Activated CD4-positive, alpha-beta T cell treated with anti-CD3 and anti-CD28 coated beads, Interleukin-2, amount 10 ng/mL, durations not matched to agents 24 days and 14 days (primary cell): ENCODE measurements at regions of chr2 and their contacts with region 1.

Region 1: GRCh38 chr2:197499594-197500526 is at the starts of genes HSPD1 and HSPE1:
- DNase-seq: peak; percentile 99
- H3K4me3 Mint-ChIP-seq: peak within 1 kb of the TSS; percentile 95
- H3K27ac Mint-ChIP-seq: peak within 1 kb of the TSS; percentile 98
- H3K4me1 Mint-ChIP-seq: peaks cover 41% of the 10 kb centered on the region
- H3K27me3 Mint-ChIP-seq: no peaks in the 10 kb centered on the region
- total RNA-seq, gene HSPD1: 984 and 999 TPM in 2 replicates
- total RNA-seq, gene HSPE1: 409 and 411 TPM in 2 replicates

Region 2: GRCh38 chr2:195756201-195756927 is 1743.5 kb before region 1 on chr2:
- intact Hi-C with region 1: no loop called
- DNase-seq: no peak
- H3K4me3 Mint-ChIP-seq: no peak overlapping the region
- H3K27ac Mint-ChIP-seq: no peak overlapping the region
- H3K4me1 Mint-ChIP-seq: no peaks in the 10 kb centered on the region
- H3K27me3 Mint-ChIP-seq: no peaks in the 10 kb centered on the region

Region 3: GRCh38 chr2:197453161-197453914 is 46.5 kb before region 1 on chr2 and contains the start of gene COQ10B:
- intact Hi-C with region 1: loop called (anchors 1 kb)
- DNase-seq: peak; percentile 100
- H3K4me3 Mint-ChIP-seq: peak within 1 kb of the TSS; percentile 100
- H3K27ac Mint-ChIP-seq: peak within 1 kb of the TSS; percentile 100
- H3K4me1 Mint-ChIP-seq: peaks cover 26% of the 10 kb centered on the region
- H3K27me3 Mint-ChIP-seq: no peaks in the 10 kb centered on the region
- total RNA-seq, gene COQ10B: 20.1 TPM in 2 replicates

Region 4: GRCh38 chr2:197480165-197481036 is 19.5 kb before region 1 on chr2:
- intact Hi-C with region 1: loop called (anchors 2 kb)
- DNase-seq: no peak
- H3K4me3 Mint-ChIP-seq: no peak overlapping the region
- H3K27ac Mint-ChIP-seq: no peak overlapping the region
- H3K4me1 Mint-ChIP-seq: no peaks in the 10 kb centered on the region
- H3K27me3 Mint-ChIP-seq: no peaks in the 10 kb centered on the region